Endothelial cell of umbilical vein (primary cell): ENCODE measurements at regions of chr2 and their contacts with region 1.

Region 1: GRCh38 chr2:180604077-180604476 is 376.3 kb upstream of the UBE2E3 start:
- DNase-seq: peak; percentile 10
- H3K4me3 ChIP-seq: no peak overlapping the region
- H3K27ac ChIP-seq: no peak overlapping the region
- H3K4me1 ChIP-seq: no peaks in the 10 kb centered on the region
- H3K27me3 ChIP-seq: peaks cover 0 to 1% of the 10 kb centered on the region in 2 experiments
- CTCF ChIP-seq: no peak
- POLR2A ChIP-seq: no peak

Region 2: GRCh38 chr2:180367815-180368214 is 236.3 kb before region 1 on chr2:
- CTCF ChIA-PET with region 1: no interaction called
- POLR2A ChIA-PET with region 1: no interaction called
- dilution Hi-C with region 1: no loop called
- intact Hi-C with region 1: no loop called
- DNase-seq: peak; percentile 6
- H3K4me3 ChIP-seq: no peak overlapping the region
- H3K27ac ChIP-seq: no peak overlapping the region
- H3K4me1 ChIP-seq: no peaks in the 10 kb centered on the region
- H3K27me3 ChIP-seq: no peaks in the 10 kb centered on the region
- CTCF ChIP-seq: no peak
- POLR2A ChIP-seq: no peak

Region 3: GRCh38 chr2:180523621-180524340 is 80.3 kb before region 1 on chr2:
- CTCF ChIA-PET with region 1: no interaction called
- POLR2A ChIA-PET with region 1: no interaction called
- dilution Hi-C with region 1: no loop called
- intact Hi-C with region 1: no loop called
- DNase-seq: peak; percentile 91
- H3K4me3 ChIP-seq: no peak overlapping the region
- H3K27ac ChIP-seq: peak overlapping the region; percentile 51
- H3K4me1 ChIP-seq: peaks cover 38% of the 10 kb centered on the region
- H3K27me3 ChIP-seq: no peaks in the 10 kb centered on the region
- CTCF ChIP-seq: no peak
- POLR2A ChIP-seq: no peak

Region 4: DNA sequence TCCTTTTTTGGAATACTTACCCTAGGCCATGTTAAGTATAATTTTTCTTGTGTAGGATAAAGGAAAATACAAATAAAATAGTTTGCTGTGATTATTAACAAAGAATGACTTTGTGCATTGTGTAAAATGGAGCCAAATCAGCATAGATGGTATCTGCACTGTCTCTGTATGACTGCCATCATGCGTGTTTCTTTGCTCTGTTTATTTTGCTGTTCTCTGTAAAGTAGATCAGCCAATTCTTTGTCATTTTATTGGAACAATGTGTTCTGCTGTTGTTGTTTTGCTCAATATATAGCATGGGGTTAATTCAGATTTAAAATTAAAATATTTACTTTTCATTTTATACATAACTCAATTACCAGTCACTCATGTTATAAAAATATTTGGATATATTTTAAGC is 195.1 kb after region 1 on chr2:
- CTCF ChIA-PET with region 1: no interaction called
- POLR2A ChIA-PET with region 1: no interaction called
- dilution Hi-C with region 1: no loop called
- intact Hi-C with region 1: loop called (anchors 10 kb)
- DNase-seq: no peak
- H3K4me3 ChIP-seq: no peak overlapping the region
- H3K27ac ChIP-seq: no peak overlapping the region
- H3K4me1 ChIP-seq: no peaks in the 10 kb centered on the region
- H3K27me3 ChIP-seq: no peaks in the 10 kb centered on the region
- CTCF ChIP-seq: no peak
- POLR2A ChIP-seq: no peak